CD8-positive, alpha-beta T cell (primary cell): ENCODE measurements at regions of chr9 and their contacts with region 1.

Region 1: GRCh38 chr9:21326526-21327139 is 8.6 kb downstream of the KLHL9 start:
- DNase-seq: peak in 2 of 9 experiments; percentile 63 to 75
- ATAC-seq: peak; percentile 90
- H3K4me3 ChIP-seq: no peak overlapping the region
- H3K4me3 Mint-ChIP-seq: no peak overlapping the region
- H3K27ac ChIP-seq: no peak overlapping the region
- H3K27ac Mint-ChIP-seq: peak overlapping the region; percentile 12
- H3K4me1 ChIP-seq: peaks cover 30% of the 10 kb centered on the region
- H3K4me1 Mint-ChIP-seq: peaks cover 49% of the 10 kb centered on the region
- H3K27me3 ChIP-seq: no peaks in the 10 kb centered on the region
- H3K27me3 Mint-ChIP-seq: no peaks in the 10 kb centered on the region
- CTCF ChIP-seq: peak; percentile 87

Region 2: DNA sequence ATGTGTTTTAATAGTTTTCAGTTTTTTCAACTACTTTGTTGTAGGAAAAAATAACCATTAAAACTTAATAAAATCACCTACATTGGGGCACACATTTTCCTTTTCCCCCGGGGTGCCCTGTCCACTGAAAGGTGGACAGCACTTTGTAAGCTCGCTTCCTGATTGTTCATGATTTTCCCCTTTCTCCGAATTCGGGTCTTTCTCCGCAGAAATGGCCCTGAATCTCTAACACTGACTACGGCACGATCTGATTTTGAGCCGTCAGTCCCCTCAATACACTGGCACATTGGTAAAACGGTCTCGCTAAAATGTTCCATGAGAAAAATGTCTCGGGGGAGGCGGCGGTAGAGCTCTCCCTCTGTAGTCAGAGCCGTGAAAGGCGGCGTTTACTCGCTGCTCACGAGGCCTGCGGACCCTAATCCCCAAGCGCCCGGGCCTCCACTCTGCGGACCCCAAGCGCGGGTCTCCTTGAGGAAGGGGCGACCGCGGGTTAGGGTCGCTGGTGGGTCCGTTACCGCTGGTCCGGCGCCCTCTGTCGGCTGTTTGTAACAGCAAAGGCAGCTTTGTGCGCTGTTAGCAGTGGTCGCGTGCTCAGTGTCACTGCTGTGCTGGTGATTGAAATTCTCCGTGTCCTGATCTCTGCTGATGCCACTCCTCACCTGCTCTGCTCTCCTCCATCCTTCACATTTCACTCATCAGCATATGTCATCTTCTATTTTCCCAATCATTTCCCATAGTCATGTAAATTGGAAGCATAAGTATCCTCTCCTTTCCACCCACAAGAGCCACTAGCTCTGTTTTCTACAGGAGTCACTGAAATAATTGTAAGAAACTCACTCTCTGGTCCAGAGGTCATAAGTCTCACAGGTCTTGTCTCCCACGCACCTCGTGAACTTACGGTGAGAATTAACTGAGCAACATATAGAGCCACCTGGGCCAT is 69.4 kb after region 1 on chr9:
- CTCF ChIA-PET with region 1: interaction called, 54 read pairs
- POLR2A ChIA-PET with region 1: interaction called, 7 read pairs
- intact Hi-C with region 1: loop called (anchors 1 kb)
- DNase-seq: peak; percentile 26 to 79 (median 65)
- ATAC-seq: peak; percentile 74
- H3K4me3 ChIP-seq: peak overlapping the region; percentile 40 to 52
- H3K4me3 Mint-ChIP-seq: peak overlapping the region; percentile 65
- H3K27ac ChIP-seq: no peak overlapping the region
- H3K27ac Mint-ChIP-seq: no peak overlapping the region
- H3K4me1 ChIP-seq: peaks cover 4% of the 10 kb centered on the region
- H3K4me1 Mint-ChIP-seq: peaks cover 5% of the 10 kb centered on the region
- H3K27me3 ChIP-seq: peaks cover 5 to 7% of the 10 kb centered on the region in 2 experiments
- H3K27me3 Mint-ChIP-seq: peaks cover 55% of the 10 kb centered on the region
- CTCF ChIP-seq: peak; percentile 81

Region 3: DNA sequence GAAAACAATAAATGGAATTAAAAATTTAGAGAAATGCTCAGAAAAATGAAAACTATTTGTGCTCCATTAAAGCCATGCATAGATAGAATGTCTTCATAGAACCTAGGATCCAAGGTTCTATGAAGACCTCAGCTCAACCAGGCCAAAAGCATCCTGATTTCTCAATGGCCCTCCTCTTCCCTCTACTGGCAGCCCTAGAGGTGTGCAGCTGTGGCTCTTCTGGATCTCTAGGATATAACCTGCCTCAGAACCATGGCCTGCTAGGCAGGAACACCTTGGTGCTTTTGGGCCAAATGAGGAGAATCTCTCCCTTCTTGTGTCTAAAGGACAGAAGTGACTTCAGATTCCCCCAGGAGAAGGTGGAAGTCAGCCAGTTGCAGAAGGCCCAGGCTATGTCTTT is 128.7 kb after region 1 on chr9:
- CTCF ChIA-PET with region 1: interaction called, 12 read pairs
- POLR2A ChIA-PET with region 1: no interaction called
- intact Hi-C with region 1: loop called (anchors 1 kb)
- DNase-seq: peak in 4 of 9 experiments; percentile 13 to 62 (median 42)
- ATAC-seq: peak; percentile 94
- H3K4me3 ChIP-seq: no peak overlapping the region
- H3K4me3 Mint-ChIP-seq: no peak overlapping the region
- H3K27ac ChIP-seq: no peak overlapping the region
- H3K27ac Mint-ChIP-seq: no peak overlapping the region
- H3K4me1 ChIP-seq: no peaks in the 10 kb centered on the region
- H3K4me1 Mint-ChIP-seq: no peaks in the 10 kb centered on the region
- H3K27me3 ChIP-seq: no peaks in the 10 kb centered on the region
- H3K27me3 Mint-ChIP-seq: peaks cover 11% of the 10 kb centered on the region
- CTCF ChIP-seq: peak; percentile 52

Region 4: DNA sequence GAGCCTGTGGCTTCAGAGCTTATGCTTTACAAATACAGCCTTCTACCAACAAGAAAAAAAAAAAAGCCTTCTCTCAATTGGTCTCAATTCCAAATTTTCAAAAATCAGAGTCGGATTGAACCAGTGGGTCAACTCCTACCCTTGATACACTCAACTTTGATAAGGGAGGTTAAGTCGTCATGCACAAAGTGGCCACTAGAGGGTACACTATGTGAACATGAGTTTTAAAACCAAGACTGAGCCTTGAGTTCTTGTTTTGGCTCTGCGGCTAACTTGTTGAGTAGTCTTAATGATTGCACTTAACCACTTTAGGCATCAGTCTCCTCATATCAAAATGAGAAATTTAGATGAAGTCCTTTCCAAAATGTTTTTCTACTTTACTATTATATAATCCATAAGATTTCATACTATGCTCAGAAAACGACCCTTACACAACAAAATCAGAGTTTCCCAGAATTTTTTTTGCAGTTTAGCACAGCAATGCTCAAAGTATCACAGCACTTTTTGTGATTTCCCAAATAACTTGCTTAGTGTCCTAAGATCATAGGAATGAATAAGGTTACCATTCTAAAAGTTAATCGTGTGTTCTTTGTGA is 382.9 kb after region 1 on chr9:
- CTCF ChIA-PET with region 1: no interaction called
- POLR2A ChIA-PET with region 1: no interaction called
- intact Hi-C with region 1: loop called in 1 of 2 experiments (anchors 2 kb)
- DNase-seq: peak; percentile 35 to 75 (median 65)
- ATAC-seq: peak; percentile 81
- H3K4me3 ChIP-seq: no peak overlapping the region
- H3K4me3 Mint-ChIP-seq: no peak overlapping the region
- H3K27ac ChIP-seq: no peak overlapping the region
- H3K27ac Mint-ChIP-seq: no peak overlapping the region
- H3K4me1 ChIP-seq: no peaks in the 10 kb centered on the region
- H3K4me1 Mint-ChIP-seq: peaks cover 20% of the 10 kb centered on the region
- H3K27me3 ChIP-seq: no peaks in the 10 kb centered on the region
- H3K27me3 Mint-ChIP-seq: no peaks in the 10 kb centered on the region
- CTCF ChIP-seq: peak; percentile 84